K562 (cell line): ENCODE measurements at regions of chr1 and their contacts with region 1.

Region 1: DNA sequence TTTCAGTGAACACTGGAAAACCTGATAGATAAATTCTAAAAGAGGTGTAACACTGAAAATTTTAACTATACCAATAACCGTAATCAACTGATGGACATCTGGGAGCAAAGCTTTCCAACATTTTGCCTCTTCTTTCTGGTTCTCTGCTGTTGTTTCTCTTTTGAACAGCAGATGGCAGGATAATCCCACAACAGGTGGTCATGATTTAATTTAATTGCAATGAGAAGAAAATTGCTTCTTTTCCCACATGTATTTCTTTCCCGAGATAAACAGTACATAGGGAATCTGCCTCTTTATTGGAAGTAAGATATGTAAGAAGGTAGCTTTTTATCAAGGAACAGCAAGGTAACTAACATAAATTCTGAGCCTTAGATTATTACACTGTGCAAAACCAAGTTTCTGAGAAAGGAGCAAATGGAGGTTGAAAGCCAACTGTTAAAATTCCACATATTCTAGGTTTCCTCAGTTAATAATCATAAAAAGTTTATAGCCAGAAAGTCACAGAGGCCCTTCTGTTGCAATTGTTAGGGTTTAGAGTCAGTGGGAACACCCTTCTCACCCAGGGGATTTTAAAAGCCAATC is 72.9 kb downstream of the RPS6KA1 start:
- DNase-seq: peak; percentile 72 to 84 (median 76)
- ATAC-seq: peak; percentile 61
- H3K4me3 ChIP-seq: no peak overlapping the region
- H3K27ac ChIP-seq: no peak overlapping the region
- H3K4me1 ChIP-seq: peaks cover 4 to 22% of the 10 kb centered on the region in 2 experiments; a peak in 4 of 5 replicates
- H3K27me3 ChIP-seq: no peaks in the 10 kb centered on the region
- CTCF ChIP-seq: peak; percentile 83 to 98 (median 83)
- EP300 ChIP-seq: 0 out of 2 replicates have a peak, but pooled peaks have one; percentile 12
- POLR2A ChIP-seq: no peak
- RAD21 ChIP-seq: peak; percentile 100

Region 2: GRCh38 chr1:26233903-26234643 is 368.4 kb before region 1 on chr1 and contains the start of gene CEP85:
- CTCF ChIA-PET with region 1: no interaction called
- POLR2A ChIA-PET with region 1: no interaction called
- in situ Hi-C with region 1: no loop called
- intact Hi-C with region 1: no loop called
- DNase-seq: peak; percentile 99 to 100 (median 100)
- ATAC-seq: peak; percentile 94
- H3K4me3 ChIP-seq: peak within 1 kb of the TSS; percentile 76
- H3K27ac ChIP-seq: peak within 1 kb of the TSS; percentile 89
- H3K4me1 ChIP-seq: peaks cover 12 to 22% of the 10 kb centered on the region in 2 experiments; a peak in 4 of 5 replicates
- H3K27me3 ChIP-seq: no peaks in the 10 kb centered on the region
- CTCF ChIP-seq: peak; percentile 96 to 99 (median 98)
- EP300 ChIP-seq: peak; percentile 55
- POLR2A ChIP-seq: peak; percentile 99
- RAD21 ChIP-seq: peak; percentile 72 to 87; a peak in 3 of 4 replicates
- polyA plus RNA-seq, gene CEP85: 42.1 to 107 TPM

Region 3: GRCh38 chr1:26582836-26583460 is 19.5 kb before region 1 on chr1:
- CTCF ChIA-PET with region 1: no interaction called
- POLR2A ChIA-PET with region 1: interaction called, 4 read pairs
- in situ Hi-C with region 1: no loop called
- intact Hi-C with region 1: loop called (anchors 1 kb)
- DNase-seq: no peak
- ATAC-seq: no peak
- H3K4me3 ChIP-seq: no peak overlapping the region
- H3K27ac ChIP-seq: no peak overlapping the region
- H3K4me1 ChIP-seq: peaks cover 0 to 7% of the 10 kb centered on the region in 2 experiments; a peak in 1 of 5 replicates
- H3K27me3 ChIP-seq: no peaks in the 10 kb centered on the region
- CTCF ChIP-seq: no peak
- EP300 ChIP-seq: no peak
- POLR2A ChIP-seq: no peak
- RAD21 ChIP-seq: no peak

Region 4: DNA sequence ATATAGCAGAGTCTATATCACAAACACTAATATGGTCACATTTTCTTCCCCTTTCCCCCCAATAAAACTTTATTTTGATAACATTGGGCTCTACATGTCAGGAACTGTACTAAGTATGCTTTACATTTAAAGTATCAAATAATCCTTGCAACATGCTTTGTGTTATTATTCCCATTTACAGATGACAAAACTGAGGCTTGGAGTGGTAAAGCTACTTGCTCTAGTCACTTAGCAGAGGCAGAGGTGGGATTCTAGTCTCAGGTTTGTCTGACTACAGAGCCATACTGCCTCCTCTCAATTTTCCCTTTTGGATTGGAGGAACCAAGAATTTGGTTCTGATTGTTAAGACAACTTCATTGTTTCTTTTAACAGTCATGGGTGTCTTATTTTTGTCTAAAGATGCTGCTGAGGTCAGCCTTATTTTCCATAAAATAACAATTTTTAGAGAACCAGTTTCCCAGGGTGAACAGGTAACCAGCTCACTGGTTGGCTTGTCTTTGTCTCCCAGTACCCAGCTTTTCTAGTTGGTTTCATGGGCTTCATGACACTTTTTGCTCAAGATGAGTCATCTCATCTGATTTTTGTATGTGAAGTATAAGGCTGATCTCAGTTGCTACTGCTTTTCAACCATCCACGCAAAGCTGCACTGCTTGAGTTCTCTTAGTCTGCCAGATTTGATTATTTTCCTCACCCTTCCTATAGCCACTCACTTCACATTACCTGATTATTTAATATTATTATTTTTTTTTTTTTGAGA is 12.4 kb after region 1 on chr1:
- CTCF ChIA-PET with region 1: no interaction called
- POLR2A ChIA-PET with region 1: interaction called, 10 read pairs
- in situ Hi-C with region 1: no loop called
- intact Hi-C with region 1: no loop called
- DNase-seq: peak in 2 of 4 experiments; percentile 22 to 23
- ATAC-seq: no peak
- H3K4me3 ChIP-seq: no peak overlapping the region
- H3K27ac ChIP-seq: no peak overlapping the region
- H3K4me1 ChIP-seq: peaks cover 3 to 28% of the 10 kb centered on the region in 2 experiments; a peak in 4 of 5 replicates
- H3K27me3 ChIP-seq: no peaks in the 10 kb centered on the region
- CTCF ChIP-seq: no peak
- EP300 ChIP-seq: no peak
- POLR2A ChIP-seq: no peak
- RAD21 ChIP-seq: no peak

Region 5: GRCh38 chr1:26677306-26678115 is 75.0 kb after region 1 on chr1:
- CTCF ChIA-PET with region 1: interaction called, 22 read pairs
- POLR2A ChIA-PET with region 1: no interaction called
- in situ Hi-C with region 1: no loop called
- intact Hi-C with region 1: loop called (anchors 1 kb)
- DNase-seq: peak; percentile 52 to 87 (median 73)
- ATAC-seq: peak; percentile 99
- H3K4me3 ChIP-seq: no peak overlapping the region
- H3K27ac ChIP-seq: no peak overlapping the region
- H3K4me1 ChIP-seq: peaks cover 9% of the 10 kb centered on the region in 2 experiments; a peak in 3 of 5 replicates
- H3K27me3 ChIP-seq: no peaks in the 10 kb centered on the region
- CTCF ChIP-seq: peak; percentile 83 to 95 (median 87)
- EP300 ChIP-seq: peak; percentile 41
- POLR2A ChIP-seq: no peak
- RAD21 ChIP-seq: peak; percentile 97 to 98

Region 6: GRCh38 chr1:26799479-26800142 is 197.1 kb after region 1 on chr1:
- CTCF ChIA-PET with region 1: interaction called, 4 read pairs
- POLR2A ChIA-PET with region 1: interaction called, 4 read pairs
- in situ Hi-C with region 1: loop called (anchors 5 kb)
- intact Hi-C with region 1: no loop called
- DNase-seq: peak in 2 of 4 experiments; percentile 51 to 55
- ATAC-seq: peak; percentile 83
- H3K4me3 ChIP-seq: no peak overlapping the region
- H3K27ac ChIP-seq: peak overlapping the region; percentile 11; the same call in 1 of the 3 replicates
- H3K4me1 ChIP-seq: peaks cover 8 to 41% of the 10 kb centered on the region in 2 experiments; a peak in 4 of 5 replicates
- H3K27me3 ChIP-seq: no peaks in the 10 kb centered on the region
- CTCF ChIP-seq: peak in 1 of 3 experiments; percentile 17; a peak in 1 of 6 replicates
- EP300 ChIP-seq: no peak
- POLR2A ChIP-seq: no peak
- RAD21 ChIP-seq: peak in 1 of 2 experiments; percentile 43; a peak in 1 of 4 replicates

Region 7: GRCh38 chr1:26874896-26875295 is 272.4 kb after region 1 on chr1:
- CTCF ChIA-PET with region 1: interaction called, 25 read pairs
- POLR2A ChIA-PET with region 1: no interaction called
- in situ Hi-C with region 1: no loop called
- intact Hi-C with region 1: loop called (anchors 1 kb)
- DNase-seq: no peak
- ATAC-seq: no peak
- H3K4me3 ChIP-seq: no peak overlapping the region
- H3K27ac ChIP-seq: no peak overlapping the region
- H3K4me1 ChIP-seq: no peaks in the 10 kb centered on the region
- H3K27me3 ChIP-seq: no peaks in the 10 kb centered on the region
- CTCF ChIP-seq: no peak
- EP300 ChIP-seq: no peak
- POLR2A ChIP-seq: no peak
- RAD21 ChIP-seq: no peak